Cardiac septum (tissue), 1 donor: ENCODE measurements at regions of chr7 and their contacts with region 1.

Region 1: DNA sequence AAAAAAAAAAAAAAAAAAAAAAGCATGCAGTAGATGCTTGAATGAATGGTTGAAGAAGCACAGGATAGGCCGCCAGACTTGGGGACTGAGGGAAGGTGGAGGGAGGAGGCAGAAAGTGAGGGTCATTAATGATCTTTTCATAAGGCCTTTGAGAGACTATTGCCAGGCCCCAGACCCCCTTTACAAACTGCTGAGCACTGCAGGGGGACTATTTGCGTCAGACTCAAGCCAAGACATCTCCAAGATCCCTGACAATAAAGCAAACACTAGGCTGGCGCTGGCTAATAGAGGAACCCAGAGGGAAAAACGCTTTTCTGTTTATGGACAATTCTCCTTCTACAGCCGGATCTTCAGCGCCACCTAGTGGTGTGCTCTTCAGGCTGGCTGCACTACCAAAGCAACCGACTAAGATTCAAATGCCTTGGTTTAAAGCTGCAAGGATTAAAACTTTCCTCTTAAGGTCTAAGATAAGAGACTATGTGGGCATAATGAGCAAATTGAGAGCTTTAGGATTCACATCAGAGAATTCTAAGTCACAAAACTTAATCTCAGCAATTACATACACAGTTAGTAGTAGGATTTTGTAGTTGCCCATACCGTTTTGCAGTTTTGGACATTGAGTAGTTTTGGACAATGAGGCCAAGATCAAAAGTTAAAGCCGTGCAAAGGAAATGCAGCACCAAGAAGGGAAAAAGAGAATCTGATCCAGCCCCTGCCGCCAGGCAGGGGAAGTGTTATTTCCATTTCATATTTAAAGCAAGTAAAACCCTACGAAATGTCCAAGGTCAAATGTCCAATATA is 17.9 kb upstream of the AGK start:
- DNase-seq: no peak

Region 2: DNA sequence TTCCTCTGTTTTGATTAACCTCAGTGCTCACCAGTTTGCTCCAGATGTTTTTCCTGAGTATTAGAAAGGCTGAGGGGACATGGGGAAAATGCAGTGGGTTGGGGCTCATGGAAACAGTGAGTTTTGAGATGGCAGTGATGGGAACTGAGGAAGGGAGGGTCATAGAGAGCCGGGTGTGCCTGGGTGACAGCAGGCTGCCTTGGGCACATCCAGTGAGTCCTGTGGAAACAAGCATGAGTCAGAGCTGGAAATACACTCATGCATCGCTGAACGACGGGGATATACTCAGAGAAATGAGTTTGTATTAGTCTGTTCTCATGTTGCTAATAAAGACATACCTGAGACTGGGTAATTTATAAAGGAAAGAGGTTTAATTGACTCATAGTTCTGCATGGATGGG is 257.3 kb before region 1 on chr7:
- intact Hi-C with region 1: loop called (anchors 10 kb)
- DNase-seq: no peak